AG04449 (cell line): ENCODE measurements at regions of chr2 and their contacts with region 1.

Region 1: DNA sequence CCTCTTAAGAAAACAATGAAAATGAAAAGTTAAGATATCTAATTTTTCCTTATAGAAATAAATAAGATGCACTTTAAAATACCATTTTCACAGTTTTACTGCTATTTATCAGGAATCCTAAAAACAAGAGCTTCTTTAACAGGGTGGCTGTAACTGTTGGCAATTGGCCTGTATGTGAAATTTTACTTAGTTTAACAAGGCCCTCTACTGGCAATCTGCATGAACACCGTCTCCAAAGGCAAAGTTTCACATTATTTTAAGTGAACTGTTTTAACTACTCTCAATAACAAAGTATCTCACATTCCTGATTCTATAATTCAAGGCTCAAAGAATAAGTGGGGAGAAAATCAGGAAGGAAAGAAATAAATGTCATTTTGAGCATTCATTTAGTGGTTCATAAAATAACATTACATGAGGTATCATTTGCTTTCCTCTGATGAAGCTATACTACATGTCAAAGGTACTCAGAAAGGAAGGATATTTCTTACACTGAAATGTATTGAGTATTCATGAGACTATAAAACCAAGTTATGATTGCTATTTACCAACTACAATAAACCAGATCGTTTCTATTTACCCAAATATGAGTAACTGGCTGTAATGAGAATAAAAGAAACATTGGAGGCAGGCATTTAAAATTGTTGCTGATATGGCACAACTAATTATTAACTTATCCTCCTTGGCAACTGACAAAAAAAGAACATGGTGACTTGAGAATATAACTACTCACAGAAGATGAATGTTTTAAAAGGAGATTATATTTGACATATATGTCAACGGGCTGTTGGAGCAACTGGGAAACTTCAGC is 7.0 kb downstream of the NCKAP5 start:
- DNase-seq: peak; percentile 57
- H3K4me3 ChIP-seq: no peak overlapping the region
- CTCF ChIP-seq: peak; percentile 67

Region 2: GRCh38 chr2:133171393-133172004 is 389.8 kb before region 1 on chr2:
- CTCF ChIA-PET with region 1: interaction called, 29 read pairs
- POLR2A ChIA-PET with region 1: no interaction called
- DNase-seq: no peak
- H3K4me3 ChIP-seq: no peak overlapping the region
- CTCF ChIP-seq: peak; percentile 44

Region 3: DNA sequence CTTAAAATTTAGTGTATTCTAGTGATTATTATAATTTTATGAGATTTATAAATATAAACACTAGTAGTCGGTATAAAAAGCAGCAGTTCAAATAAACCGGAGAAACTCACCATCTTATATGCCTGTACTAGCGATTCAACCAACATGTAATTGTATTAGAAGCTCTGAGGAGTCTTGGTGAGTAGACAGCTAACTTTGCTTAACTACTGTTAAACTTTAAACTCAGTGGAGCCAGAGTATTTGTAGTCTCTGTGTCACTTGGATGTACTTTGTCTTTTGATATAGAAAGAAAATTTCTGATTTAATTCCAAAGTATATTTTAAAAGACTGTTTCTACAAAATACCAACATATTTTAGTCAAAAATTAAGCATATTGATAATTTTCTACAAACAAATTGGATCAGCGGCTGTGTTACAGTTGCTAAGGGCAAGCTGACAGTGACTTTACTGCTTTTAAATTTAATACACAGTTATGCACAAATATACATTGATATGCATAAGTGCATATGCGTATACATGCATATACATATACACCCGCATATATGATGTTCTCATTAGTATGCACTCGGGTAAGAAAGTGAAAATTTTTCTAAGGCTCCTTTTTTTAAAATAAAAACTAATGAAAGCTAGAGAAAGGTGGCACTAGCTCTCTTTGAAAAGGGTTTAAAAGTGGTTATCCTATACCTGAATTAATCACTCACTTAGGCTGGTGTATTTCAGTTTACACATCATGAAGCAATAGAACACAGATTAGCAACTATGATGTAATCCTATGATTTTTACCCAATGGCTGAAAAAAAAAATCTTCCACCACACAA is 367.5 kb before region 1 on chr2:
- CTCF ChIA-PET with region 1: interaction called, 15 read pairs
- POLR2A ChIA-PET with region 1: no interaction called
- DNase-seq: no peak
- H3K4me3 ChIP-seq: no peak overlapping the region
- CTCF ChIP-seq: no peak

Region 4: GRCh38 chr2:133266041-133266925 is 295.0 kb before region 1 on chr2:
- CTCF ChIA-PET with region 1: interaction called, 74 read pairs
- POLR2A ChIA-PET with region 1: no interaction called
- DNase-seq: no peak
- H3K4me3 ChIP-seq: peak overlapping the region; percentile 63
- CTCF ChIP-seq: peak; percentile 12

Region 5: DNA sequence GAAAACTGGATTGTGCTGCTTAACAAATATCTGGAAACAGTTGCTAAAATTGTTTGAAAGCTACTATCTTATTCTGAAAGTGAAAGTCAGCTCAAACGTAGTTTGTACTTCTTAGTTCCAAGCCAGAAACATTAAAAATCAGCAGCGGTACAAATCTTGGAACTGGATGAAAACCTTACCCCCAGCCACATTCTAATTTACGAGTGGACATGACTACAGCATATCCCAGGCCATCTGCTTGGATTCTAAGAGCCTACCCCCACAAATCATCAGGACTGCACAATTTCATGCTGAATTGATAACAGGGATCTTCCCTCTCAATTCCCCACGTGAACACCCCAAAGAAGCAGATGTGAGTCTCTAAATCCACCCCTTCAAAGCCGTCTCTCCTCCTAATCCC is 165.7 kb after region 1 on chr2:
- CTCF ChIA-PET with region 1: no interaction called
- POLR2A ChIA-PET with region 1: no interaction called
- DNase-seq: no peak
- H3K4me3 ChIP-seq: peak overlapping the region; percentile 16
- CTCF ChIP-seq: no peak

Region 6: DNA sequence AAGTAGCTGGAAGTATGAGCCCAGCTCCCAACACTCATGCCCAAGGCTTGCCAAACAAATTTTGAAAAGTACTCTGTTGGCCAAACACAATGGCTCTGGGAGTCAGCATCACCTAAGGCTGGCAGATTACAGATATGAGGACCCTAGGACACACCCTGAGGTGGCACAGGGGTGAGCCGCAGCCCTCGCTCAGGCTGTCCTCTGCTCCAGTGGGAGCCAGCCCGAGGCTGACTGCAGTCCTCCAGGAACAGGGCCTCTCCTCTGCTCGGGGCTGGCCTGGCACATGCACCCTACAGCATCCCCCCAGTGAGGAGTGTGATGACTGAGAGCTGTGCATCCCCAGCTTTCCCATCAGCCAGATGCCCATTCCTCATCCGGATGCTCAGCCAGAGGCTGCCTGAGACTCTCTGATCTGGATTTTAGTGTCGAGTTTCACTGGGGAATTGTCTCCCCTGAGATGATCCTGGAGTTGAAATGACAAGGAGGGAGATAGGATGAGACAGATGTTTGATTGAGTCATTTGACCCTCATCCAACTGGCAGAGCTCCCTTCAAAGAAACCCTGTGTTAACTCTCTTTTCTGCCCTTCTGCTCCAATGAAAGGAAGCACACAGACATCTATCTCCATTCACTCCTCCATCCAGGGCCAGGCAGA is 276.3 kb after region 1 on chr2:
- CTCF ChIA-PET with region 1: interaction called, 35 read pairs
- POLR2A ChIA-PET with region 1: no interaction called
- DNase-seq: no peak
- H3K4me3 ChIP-seq: no peak overlapping the region
- CTCF ChIP-seq: no peak

Region 7: DNA sequence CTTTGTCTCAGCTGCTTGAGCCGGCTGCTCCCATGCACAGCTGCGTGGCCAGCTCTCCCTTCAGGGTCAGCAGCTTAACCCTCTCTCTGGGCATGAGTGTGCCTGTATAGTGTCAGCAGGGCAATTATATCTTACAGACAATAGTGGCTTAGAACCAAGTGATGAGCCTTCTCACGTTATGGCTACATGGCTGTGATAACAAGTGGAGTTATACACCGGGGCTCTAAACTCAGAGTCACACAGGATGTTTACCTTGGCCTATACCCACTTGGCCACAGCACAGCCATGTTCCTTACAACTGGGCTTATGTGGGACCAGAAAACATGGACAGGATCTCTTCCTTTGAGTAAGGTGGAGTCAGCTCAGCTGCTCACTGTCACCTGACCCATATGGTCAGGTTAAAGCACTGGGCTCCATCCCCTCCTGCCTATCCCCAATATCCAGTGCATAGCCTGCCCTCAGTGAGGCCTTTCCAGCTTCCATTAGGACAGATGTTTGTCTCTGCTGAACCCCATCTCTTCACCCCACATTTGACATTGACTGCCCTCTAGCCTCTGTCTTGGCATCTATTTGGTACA is 301.2 kb after region 1 on chr2:
- CTCF ChIA-PET with region 1: no interaction called
- POLR2A ChIA-PET with region 1: no interaction called
- DNase-seq: no peak
- H3K4me3 ChIP-seq: no peak overlapping the region
- CTCF ChIP-seq: no peak